ENCODE measurements at regions of chr1 and their contacts with region 1.

Region 1: GRCh38 chr1:150629115-150629928 is at the start of gene ENSA:
- DNase-seq: peak; percentile 95 to 99
- ATAC-seq: peak; percentile 96 to 98 (median 97)
- H3K4me3 ChIP-seq: peak within 1 kb of the TSS; percentile 48 to 81 (median 66)
- H3K27ac ChIP-seq: peak within 1 kb of the TSS; percentile 83 to 100 (median 96)
- H3K4me1 ChIP-seq: peaks cover 3 to 54% (median 24%) of the 10 kb centered on the region in 9 donors
- H3K27me3 ChIP-seq: no peaks in the 10 kb centered on the region
- CTCF ChIP-seq: no peak
- total RNA-seq, gene ENSA: 115 to 148 (median 132) TPM

Region 2: DNA sequence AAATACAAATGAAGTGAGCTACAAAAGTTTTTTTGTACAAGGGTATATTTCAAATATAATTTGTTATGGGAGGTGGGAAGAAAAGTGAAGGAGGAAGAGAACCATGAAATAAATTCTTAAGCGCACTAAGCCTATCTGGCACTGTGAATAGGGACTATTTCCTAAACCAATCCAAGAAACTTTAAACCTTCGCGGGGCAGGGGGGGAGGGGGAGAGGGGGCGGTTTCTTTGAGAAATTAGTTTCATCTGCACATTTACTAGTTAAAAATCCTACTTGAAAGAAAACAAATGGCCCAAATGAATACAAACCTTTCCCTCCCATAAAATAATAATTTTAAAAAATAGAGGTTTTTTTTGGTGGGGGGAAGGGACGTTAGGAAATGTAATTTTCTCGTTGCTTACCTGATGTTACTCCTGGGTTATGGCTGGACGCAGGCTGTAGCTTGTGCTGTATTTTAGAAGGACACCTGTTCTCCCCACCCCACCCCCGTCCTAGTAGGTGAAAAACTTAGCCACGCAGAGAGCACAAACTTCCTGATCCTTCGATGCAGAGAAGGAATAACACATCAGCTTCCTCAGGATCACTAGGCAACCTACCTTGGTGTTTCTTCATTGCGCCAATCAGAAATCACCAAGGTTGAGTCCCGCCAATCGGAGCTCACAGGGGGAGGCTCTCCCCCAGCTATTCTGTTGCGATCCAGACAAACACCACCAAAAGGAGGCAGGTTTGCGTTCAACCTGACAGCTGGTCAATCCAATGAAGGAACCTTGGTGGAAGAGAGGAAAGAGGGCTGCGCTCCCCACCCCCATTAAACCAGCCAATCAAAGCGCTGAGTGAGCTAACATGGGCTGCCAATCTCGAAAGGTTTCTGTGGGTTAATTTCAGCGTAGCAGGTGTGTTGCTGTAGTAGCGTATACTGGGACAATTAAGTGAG is 67.5 kb after region 1 on chr1 and contains the start of gene GOLPH3L:
- intact Hi-C with region 1: loop called in 3 of 10 experiments (anchors 1 to 10 kb)
- DNase-seq: peak; percentile 80 to 97
- ATAC-seq: peak; percentile 100
- H3K4me3 ChIP-seq: peak within 1 kb of the TSS; percentile 48 to 79 (median 72)
- H3K27ac ChIP-seq: peak within 1 kb of the TSS in 9 of 10 donors; percentile 26 to 76 (median 68)
- H3K4me1 ChIP-seq: peaks cover 0 to 26% (median 17%) of the 10 kb centered on the region in 9 donors
- H3K27me3 ChIP-seq: no peaks in the 10 kb centered on the region
- CTCF ChIP-seq: peak in 5 of 9 donors; percentile 11 to 55 (median 22)
- total RNA-seq, gene GOLPH3L: 10.9 to 17.8 (median 15.4) TPM

Region 3: GRCh38 chr1:150869683-150870082 is 240.4 kb after region 1 on chr1:
- intact Hi-C with region 1: no loop called
- DNase-seq: no peak
- ATAC-seq: no peak
- H3K4me3 ChIP-seq: no peak overlapping the region
- H3K27ac ChIP-seq: no peak overlapping the region
- H3K4me1 ChIP-seq: peaks cover 0 to 39% (median 15%) of the 10 kb centered on the region in 9 donors
- H3K27me3 ChIP-seq: no peaks in the 10 kb centered on the region
- CTCF ChIP-seq: no peak

Measured in heart right ventricle (tissue), 16 donors.